ENCODE measurements at regions of chr2 and their contacts with region 1.

Region 1: DNA sequence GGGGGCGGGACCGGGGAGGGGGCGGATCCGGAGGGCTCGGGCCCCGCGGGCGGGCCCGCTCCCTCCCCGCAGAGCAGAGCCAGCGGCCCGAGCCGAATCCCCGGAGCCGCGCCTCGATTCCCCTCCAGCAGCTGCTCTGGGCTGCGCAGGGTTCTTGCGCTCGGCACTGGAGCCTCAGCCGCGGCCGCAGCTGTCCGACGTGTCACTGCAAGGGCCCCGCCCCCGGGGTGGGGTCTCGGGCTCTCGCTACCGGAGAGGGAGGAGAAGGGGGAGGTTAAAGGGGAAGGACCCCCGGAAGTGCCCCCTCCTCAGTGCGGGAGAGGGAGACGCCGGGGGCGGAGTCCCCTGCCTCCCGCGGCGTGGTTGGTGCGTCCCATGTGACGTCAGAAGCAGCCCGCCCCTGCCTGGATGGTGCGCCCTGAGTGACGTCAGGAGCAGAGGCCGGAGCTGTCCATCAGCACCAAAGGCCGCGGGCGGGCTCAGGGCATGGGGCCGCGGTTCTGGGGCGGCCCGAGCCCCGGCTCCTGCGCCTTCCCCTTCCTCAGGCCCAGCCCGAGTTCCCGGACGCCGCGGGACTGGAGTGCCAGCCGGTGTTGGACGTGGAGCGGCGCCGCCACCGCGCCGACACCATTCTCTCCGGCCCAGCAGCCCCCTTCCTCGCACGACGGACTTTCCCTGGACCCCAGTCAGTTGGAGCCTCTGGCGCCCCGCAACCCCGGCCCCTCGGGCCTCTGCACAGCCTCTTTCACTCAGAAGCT is at the starts of genes CHPF and TMEM198:
- DNase-seq: peak; percentile 93
- H3K4me3 Mint-ChIP-seq: peak within 1 kb of the TSS; percentile 91
- H3K27ac Mint-ChIP-seq: peak within 1 kb of the TSS; percentile 71
- H3K4me1 Mint-ChIP-seq: peaks cover 11% of the 10 kb centered on the region
- H3K27me3 Mint-ChIP-seq: peaks cover 16% of the 10 kb centered on the region
- total RNA-seq, gene CHPF: 40.2 and 41.9 TPM in 2 replicates
- total RNA-seq, gene TMEM198: 3.8 and 4.9 TPM in 2 replicates

Region 2: GRCh38 chr2:219441451-219442255 is 102.1 kb before region 1 on chr2:
- intact Hi-C with region 1: no loop called
- DNase-seq: no peak
- H3K4me3 Mint-ChIP-seq: peak overlapping the region; percentile 67
- H3K27ac Mint-ChIP-seq: no peak overlapping the region
- H3K4me1 Mint-ChIP-seq: peaks cover 11% of the 10 kb centered on the region
- H3K27me3 Mint-ChIP-seq: peaks cover 43% of the 10 kb centered on the region

Region 3: DNA sequence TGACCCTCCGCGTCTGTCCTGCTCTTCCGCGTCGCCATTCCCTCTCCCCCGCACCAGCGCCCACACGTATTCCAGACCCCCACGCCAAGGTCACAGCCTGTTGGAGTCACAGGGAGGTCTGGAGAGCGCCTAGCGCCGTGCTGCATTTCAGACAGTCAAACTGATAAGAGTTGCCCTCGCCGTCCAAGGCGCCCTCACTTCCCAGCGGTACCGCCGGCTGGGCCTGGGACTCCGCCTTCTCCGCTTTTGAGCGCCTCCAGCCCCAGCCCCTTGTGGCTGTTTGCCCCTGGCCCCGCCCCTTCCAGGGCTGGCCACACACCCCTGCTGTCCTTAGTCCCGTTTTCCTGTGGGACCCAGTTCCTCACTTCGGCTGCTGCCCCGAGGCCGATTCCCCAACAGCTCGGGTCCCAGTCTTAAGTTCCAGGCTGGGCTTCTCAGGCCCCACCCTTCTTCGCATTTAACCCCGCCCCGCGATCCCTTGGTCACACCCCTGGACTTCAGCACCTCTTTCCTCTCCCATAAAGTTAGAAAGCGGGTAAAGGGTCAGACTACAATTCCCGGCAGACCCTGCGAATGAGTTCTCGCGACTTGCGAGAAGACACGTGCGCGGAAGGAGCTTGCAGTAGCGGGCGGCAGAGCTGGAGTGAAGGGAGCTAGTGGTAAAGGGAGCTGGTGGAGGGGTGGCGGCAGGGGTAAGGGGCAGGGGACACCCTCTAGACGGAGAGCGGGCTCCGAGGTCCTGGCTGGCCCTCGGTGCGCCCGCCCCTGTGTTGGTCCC is 45.3 kb before region 1 on chr2 and contains the start of gene GMPPA:
- intact Hi-C with region 1: loop called (anchors 1 kb)
- DNase-seq: peak; percentile 95
- H3K4me3 Mint-ChIP-seq: peak within 1 kb of the TSS; percentile 96
- H3K27ac Mint-ChIP-seq: peak within 1 kb of the TSS; percentile 91
- H3K4me1 Mint-ChIP-seq: peaks cover 33% of the 10 kb centered on the region
- H3K27me3 Mint-ChIP-seq: peaks cover 43% of the 10 kb centered on the region
- total RNA-seq, gene GMPPA: 52.0 and 52.9 TPM in 2 replicates

Region 4: GRCh38 chr2:219559204-219559920 is 15.6 kb after region 1 on chr2:
- intact Hi-C with region 1: loop called (anchors 2 kb)
- DNase-seq: no peak
- H3K4me3 Mint-ChIP-seq: no peak overlapping the region
- H3K27ac Mint-ChIP-seq: no peak overlapping the region
- H3K4me1 Mint-ChIP-seq: no peaks in the 10 kb centered on the region
- H3K27me3 Mint-ChIP-seq: no peaks in the 10 kb centered on the region

Region 5: GRCh38 chr2:219597552-219598307 is 54.0 kb after region 1 on chr2 and contains the start of gene STK11IP:
- intact Hi-C with region 1: loop called (anchors 1 kb)
- DNase-seq: peak; percentile 89
- H3K4me3 Mint-ChIP-seq: peak within 1 kb of the TSS; percentile 93
- H3K27ac Mint-ChIP-seq: peak within 1 kb of the TSS; percentile 90
- H3K4me1 Mint-ChIP-seq: peaks cover 18% of the 10 kb centered on the region
- H3K27me3 Mint-ChIP-seq: no peaks in the 10 kb centered on the region
- total RNA-seq, gene STK11IP: 32.5 and 38.1 TPM in 2 replicates

Region 6: GRCh38 chr2:219642465-219643080 is 98.8 kb after region 1 on chr2:
- intact Hi-C with region 1: loop called (anchors 1 kb)
- DNase-seq: peak; percentile 85
- H3K4me3 Mint-ChIP-seq: no peak overlapping the region
- H3K27ac Mint-ChIP-seq: no peak overlapping the region
- H3K4me1 Mint-ChIP-seq: peaks cover 6% of the 10 kb centered on the region
- H3K27me3 Mint-ChIP-seq: peaks cover 7% of the 10 kb centered on the region

Region 7: GRCh38 chr2:219689676-219690628 is 146.2 kb after region 1 on chr2:
- intact Hi-C with region 1: loop called (anchors 1 kb)
- DNase-seq: peak; percentile 11
- H3K4me3 Mint-ChIP-seq: no peak overlapping the region
- H3K27ac Mint-ChIP-seq: no peak overlapping the region
- H3K4me1 Mint-ChIP-seq: peaks cover 5% of the 10 kb centered on the region
- H3K27me3 Mint-ChIP-seq: peaks cover 10% of the 10 kb centered on the region